Colonic mucosa (tissue), 4 donors: ENCODE measurements at regions of chr22 and their contacts with region 1.

Region 1: GRCh38 chr22:34105461-34106062 is 185.3 kb upstream of the LARGE1 start:
- DNase-seq: peak; percentile 73
- H3K4me3 ChIP-seq: no peak overlapping the region
- H3K27ac ChIP-seq: no peak overlapping the region
- H3K4me1 ChIP-seq: no peaks in the 10 kb centered on the region
- H3K27me3 ChIP-seq: no peaks in the 10 kb centered on the region
- CTCF ChIP-seq: peak; percentile 47

Region 2: DNA sequence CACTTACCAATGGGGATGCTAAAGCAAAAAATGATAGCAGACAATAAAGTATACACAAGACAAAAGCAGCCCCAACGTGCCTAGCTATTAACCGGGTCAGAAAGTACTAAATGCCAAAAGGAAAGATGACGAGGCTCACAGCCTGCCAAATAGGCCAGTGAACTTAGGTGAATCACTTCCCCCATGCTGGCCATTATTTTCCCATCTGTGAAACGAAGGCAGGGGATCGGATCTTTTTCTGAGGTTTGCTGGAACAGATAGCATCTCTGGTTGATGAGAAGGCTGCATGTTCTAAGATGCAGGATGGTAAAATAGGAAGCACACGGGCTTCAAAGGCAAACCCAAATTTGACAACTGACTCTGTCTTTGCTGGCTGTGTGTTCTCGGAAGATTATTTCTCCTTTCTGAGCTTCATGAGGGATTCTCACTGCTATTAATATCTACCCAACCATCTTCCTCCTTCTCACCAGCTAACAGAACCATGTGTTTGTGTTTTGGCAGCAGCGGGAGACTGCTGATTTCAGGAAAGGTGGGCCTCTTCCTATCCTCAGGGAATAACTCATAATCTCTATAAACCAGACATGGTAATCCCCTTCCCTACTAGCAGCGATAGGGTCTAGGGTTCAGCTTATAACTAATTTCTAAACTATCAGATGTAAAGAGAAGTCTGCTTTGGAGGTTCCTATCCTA is 576.0 kb before region 1 on chr22:
- intact Hi-C with region 1: loop called (anchors 10 kb)
- DNase-seq: no peak
- H3K4me3 ChIP-seq: no peak overlapping the region
- H3K27ac ChIP-seq: no peak overlapping the region
- H3K4me1 ChIP-seq: no peaks in the 10 kb centered on the region
- H3K27me3 ChIP-seq: no peaks in the 10 kb centered on the region
- CTCF ChIP-seq: no peak